Heart left ventricle (tissue), 16 donors: ENCODE measurements at regions of chr19 and their contacts with region 1.

Region 1: DNA sequence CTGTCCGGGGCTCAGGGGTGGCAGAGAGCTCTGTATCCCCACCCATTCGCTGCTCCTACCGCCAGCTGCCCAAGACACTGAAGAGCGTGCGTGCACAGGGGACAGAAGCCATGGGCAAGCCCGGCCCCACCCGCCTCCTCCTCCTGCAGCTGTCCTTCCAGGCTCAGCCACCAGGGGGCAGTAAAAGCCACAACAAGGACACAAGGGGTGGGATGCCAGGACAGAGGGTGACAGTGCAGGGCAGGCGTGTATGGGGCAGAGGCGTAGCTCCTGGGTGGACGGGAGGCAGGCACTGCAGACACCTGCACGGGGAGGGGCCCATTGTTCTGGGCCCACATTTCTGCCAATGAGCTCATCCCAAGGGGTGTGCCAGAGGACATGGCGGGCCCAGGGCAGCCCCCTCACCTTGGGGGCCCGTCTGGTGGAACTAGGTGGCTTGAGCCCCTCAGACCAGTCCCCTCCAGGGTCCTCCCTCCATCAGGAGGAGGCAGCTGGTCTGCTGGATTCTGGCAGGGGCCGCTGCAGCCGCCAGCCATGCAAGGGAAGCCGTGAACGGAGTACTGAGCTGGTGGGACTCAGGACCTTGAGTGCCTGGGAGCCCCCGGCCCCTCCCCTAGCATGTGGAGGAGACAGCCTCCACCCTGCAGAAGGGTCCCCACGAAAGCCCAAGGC is 61.1 kb downstream of the MLLT1 start:
- DNase-seq: peak; percentile 84 to 92 (median 89)
- ATAC-seq: peak; percentile 66 to 86 (median 72)
- H3K4me3 ChIP-seq: no peak overlapping the region
- H3K27ac ChIP-seq: peak overlapping the region in 4 of 12 donors; percentile 8 to 41 (median 12)
- H3K4me1 ChIP-seq: peaks cover 8 to 63% (median 45%) of the 10 kb centered on the region in 12 donors
- H3K27me3 ChIP-seq: no peaks in the 10 kb centered on the region
- CTCF ChIP-seq: peak; percentile 93 to 99 (median 96)
- POLR2A ChIP-seq: no peak

Region 2: GRCh38 chr19:6260912-6261650 is 42.5 kb after region 1 on chr19:
- intact Hi-C with region 1: loop called in 1 of 10 experiments (anchors 5 kb)
- DNase-seq: no peak
- ATAC-seq: peak; percentile 43 to 61 (median 52)
- H3K4me3 ChIP-seq: no peak overlapping the region
- H3K27ac ChIP-seq: no peak overlapping the region
- H3K4me1 ChIP-seq: peaks cover 0 to 24% (median 5%) of the 10 kb centered on the region in 12 donors
- H3K27me3 ChIP-seq: no peaks in the 10 kb centered on the region
- CTCF ChIP-seq: peak; percentile 35 to 64 (median 52)
- POLR2A ChIP-seq: no peak

Region 3: DNA sequence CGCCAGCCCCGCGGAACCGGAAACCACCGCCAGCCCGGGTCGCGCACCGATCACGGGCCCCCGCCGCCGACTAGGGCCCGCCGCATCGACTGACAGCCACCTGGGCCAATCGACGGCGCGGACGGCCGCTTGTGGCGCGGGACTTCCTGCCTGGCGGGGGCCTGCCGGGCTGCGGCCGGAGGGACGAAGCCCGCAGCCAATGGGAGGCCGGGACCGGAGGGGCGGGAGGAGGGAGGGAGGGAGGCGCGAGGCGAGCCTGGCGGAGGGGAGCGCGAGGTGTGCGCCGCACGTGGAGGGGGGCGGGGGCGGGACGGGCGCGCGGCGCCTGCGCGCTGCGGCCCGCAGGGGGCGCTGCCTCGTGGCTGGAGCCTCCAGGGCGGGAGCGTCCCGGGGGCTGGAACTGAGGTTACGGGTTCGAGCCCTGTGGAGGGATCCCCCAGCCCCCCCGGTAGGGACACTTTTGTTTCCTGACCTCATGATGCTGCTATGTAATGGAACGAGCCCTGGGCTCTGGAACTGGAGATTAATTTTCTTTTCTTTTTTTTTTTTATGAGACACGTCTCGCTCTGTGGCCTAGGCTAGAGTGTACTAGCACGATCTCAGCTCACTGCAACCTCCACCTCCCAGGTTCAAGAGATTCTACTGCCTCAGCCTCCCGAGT is 61.4 kb after region 1 on chr19 and contains the start of gene MLLT1:
- intact Hi-C with region 1: loop called in 7 of 10 experiments (anchors 1 to 10 kb)
- DNase-seq: peak; percentile 98 to 99 (median 98)
- ATAC-seq: peak; percentile 93 to 99 (median 98)
- H3K4me3 ChIP-seq: peak within 1 kb of the TSS; percentile 50 to 97 (median 84)
- H3K27ac ChIP-seq: peak within 1 kb of the TSS in 11 of 12 donors; percentile 44 to 90 (median 81)
- H3K4me1 ChIP-seq: peaks cover 8 to 48% (median 37%) of the 10 kb centered on the region in 12 donors
- H3K27me3 ChIP-seq: no peaks in the 10 kb centered on the region
- CTCF ChIP-seq: peak; percentile 56 to 91 (median 82)
- POLR2A ChIP-seq: peak in 1 of 2 donors; percentile 46
- total RNA-seq, gene MLLT1: 21.0 to 45.9 (median 34.9) TPM

Region 4: DNA sequence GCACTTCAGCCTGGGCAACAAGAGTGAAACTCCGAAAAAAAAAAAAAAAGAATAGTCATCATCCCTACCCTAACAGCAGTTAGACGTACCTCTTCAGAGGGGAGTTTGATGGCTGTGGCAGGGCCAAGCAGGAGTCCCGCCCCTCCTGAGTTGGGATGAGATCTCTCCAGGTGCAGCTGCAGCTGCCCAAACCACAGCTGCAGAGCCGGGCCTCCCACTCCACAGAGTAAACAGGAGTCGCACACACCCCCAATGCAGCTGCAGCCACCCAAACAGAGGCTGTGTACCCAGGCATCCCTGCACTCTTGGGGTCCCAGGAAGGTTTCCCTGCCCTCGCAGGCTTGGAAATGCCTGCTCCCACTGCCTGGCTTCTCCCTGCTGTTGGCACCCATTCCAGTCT is 78.6 kb after region 1 on chr19:
- intact Hi-C with region 1: loop called (anchors 1 to 5 kb)
- DNase-seq: no peak
- ATAC-seq: no peak
- H3K4me3 ChIP-seq: no peak overlapping the region
- H3K27ac ChIP-seq: no peak overlapping the region
- H3K4me1 ChIP-seq: no peaks in the 10 kb centered on the region
- H3K27me3 ChIP-seq: peaks cover 0 to 8% (median 0%) of the 10 kb centered on the region in 9 donors
- CTCF ChIP-seq: no peak
- POLR2A ChIP-seq: no peak